Mucosa of descending colon (tissue), 3 donors: ENCODE measurements at regions of chr5 and their contacts with region 1.

Region 1: DNA sequence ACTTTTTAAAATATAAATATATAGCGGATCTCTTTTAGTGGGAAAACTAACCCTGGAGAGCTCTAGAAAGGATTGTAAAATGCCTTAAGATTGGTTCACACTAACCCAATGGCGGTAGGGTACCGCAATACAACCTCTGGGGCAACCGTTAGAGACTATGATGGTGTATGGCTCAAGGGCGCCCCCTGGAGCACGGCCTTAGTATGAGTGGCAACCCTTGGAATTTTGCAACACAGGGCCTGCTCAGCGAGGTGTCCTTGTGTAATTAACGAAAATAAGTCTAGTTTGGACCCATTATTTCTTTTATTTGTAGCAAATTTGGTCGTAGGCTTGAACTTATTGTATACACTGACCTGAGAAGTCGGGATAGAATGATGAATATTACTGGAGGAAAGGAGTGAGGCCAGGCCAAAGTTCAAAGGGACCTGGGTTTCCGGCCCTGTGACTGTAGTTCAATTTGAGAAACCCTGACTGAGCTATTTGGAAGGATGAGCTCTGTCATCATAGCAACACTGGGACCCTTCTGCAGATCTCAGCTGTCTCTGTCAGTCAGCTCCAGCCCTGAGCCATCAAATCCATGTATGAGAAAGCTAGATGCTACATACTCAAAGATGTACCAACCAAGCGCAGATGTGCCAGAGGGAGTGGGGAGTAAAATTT is 54.8 kb downstream of the CAMK4 start:
- DNase-seq: peak; percentile 52 to 84 (median 76)
- ATAC-seq: peak; percentile 92
- H3K4me3 ChIP-seq: no peak overlapping the region
- H3K4me1 ChIP-seq: no peaks in the 10 kb centered on the region
- CTCF ChIP-seq: peak; percentile 32

Region 2: GRCh38 chr5:111158105-111158744 is 120.8 kb before region 1 on chr5:
- intact Hi-C with region 1: loop called (anchors 5 to 10 kb)
- DNase-seq: peak in 1 of 3 donors; percentile 91
- ATAC-seq: peak; percentile 70
- H3K4me3 ChIP-seq: no peak overlapping the region
- H3K4me1 ChIP-seq: no peaks in the 10 kb centered on the region
- CTCF ChIP-seq: peak; percentile 98